Endothelial cell of umbilical vein (primary cell): ENCODE measurements at regions of chr3 and their contacts with region 1.

Region 1: DNA sequence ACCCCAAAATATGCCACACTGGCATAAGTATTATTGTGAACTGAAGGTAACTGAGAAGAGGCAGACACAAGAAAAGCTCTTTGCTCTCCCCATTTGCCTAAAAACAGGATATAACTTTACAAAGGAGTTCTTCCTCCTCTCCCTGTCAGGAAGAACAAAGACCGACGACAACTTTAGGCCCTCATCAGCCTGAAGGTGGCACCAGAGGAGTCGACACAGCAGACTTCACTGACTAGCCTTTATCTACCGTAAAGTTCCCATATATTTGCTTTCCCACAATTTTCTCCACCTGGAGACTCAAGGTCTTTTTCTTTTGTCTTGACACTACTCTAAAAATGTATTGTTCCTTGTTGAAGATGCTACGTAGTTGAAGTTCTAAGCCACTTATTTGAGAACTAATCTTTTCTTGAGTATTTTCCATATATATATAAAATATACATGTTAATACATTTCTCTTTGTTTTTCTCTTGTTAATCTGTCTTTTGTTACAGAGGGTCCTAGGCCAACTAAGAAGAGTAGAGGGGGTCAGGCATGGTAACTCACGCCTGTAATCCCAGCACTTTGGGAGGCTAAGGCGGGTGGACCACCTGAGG is 16.2 kb upstream of the XIRP1 start:
- DNase-seq: peak; percentile 73
- H3K4me3 ChIP-seq: no peak overlapping the region
- H3K27ac ChIP-seq: no peak overlapping the region
- H3K4me1 ChIP-seq: no peaks in the 10 kb centered on the region
- H3K27me3 ChIP-seq: peaks cover 6 to 19% of the 10 kb centered on the region in 2 experiments
- CTCF ChIP-seq: peak; percentile 62 to 73
- POLR2A ChIP-seq: no peak

Region 2: GRCh38 chr3:39196671-39197356 is 11.7 kb before region 1 on chr3:
- CTCF ChIA-PET with region 1: interaction called, 11 read pairs
- POLR2A ChIA-PET with region 1: no interaction called
- dilution Hi-C with region 1: no loop called
- intact Hi-C with region 1: no loop called
- DNase-seq: no peak
- H3K4me3 ChIP-seq: no peak overlapping the region
- H3K27ac ChIP-seq: no peak overlapping the region
- H3K4me1 ChIP-seq: no peaks in the 10 kb centered on the region
- H3K27me3 ChIP-seq: peaks cover 0 to 5% of the 10 kb centered on the region in 2 experiments
- CTCF ChIP-seq: no peak
- POLR2A ChIP-seq: no peak

Region 3: GRCh38 chr3:39226106-39226741 is 17.7 kb after region 1 on chr3:
- CTCF ChIA-PET with region 1: no interaction called
- POLR2A ChIA-PET with region 1: no interaction called
- dilution Hi-C with region 1: no loop called
- intact Hi-C with region 1: no loop called
- DNase-seq: no peak
- H3K4me3 ChIP-seq: no peak overlapping the region
- H3K27ac ChIP-seq: no peak overlapping the region
- H3K4me1 ChIP-seq: no peaks in the 10 kb centered on the region
- H3K27me3 ChIP-seq: peaks cover 10 to 15% of the 10 kb centered on the region in 2 experiments
- CTCF ChIP-seq: no peak
- POLR2A ChIP-seq: no peak

Region 4: GRCh38 chr3:39378088-39378487 is 169.5 kb after region 1 on chr3:
- CTCF ChIA-PET with region 1: no interaction called
- POLR2A ChIA-PET with region 1: no interaction called
- dilution Hi-C with region 1: no loop called
- intact Hi-C with region 1: loop called (anchors 2 kb)
- DNase-seq: peak; percentile 38
- H3K4me3 ChIP-seq: no peak overlapping the region
- H3K27ac ChIP-seq: no peak overlapping the region
- H3K4me1 ChIP-seq: peaks cover 18% of the 10 kb centered on the region
- H3K27me3 ChIP-seq: peaks cover 0 to 2% of the 10 kb centered on the region in 2 experiments
- CTCF ChIP-seq: peak; percentile 69 to 77
- POLR2A ChIP-seq: no peak